ENCODE measurements at regions of chr15 and their contacts with region 1.

Region 1: DNA sequence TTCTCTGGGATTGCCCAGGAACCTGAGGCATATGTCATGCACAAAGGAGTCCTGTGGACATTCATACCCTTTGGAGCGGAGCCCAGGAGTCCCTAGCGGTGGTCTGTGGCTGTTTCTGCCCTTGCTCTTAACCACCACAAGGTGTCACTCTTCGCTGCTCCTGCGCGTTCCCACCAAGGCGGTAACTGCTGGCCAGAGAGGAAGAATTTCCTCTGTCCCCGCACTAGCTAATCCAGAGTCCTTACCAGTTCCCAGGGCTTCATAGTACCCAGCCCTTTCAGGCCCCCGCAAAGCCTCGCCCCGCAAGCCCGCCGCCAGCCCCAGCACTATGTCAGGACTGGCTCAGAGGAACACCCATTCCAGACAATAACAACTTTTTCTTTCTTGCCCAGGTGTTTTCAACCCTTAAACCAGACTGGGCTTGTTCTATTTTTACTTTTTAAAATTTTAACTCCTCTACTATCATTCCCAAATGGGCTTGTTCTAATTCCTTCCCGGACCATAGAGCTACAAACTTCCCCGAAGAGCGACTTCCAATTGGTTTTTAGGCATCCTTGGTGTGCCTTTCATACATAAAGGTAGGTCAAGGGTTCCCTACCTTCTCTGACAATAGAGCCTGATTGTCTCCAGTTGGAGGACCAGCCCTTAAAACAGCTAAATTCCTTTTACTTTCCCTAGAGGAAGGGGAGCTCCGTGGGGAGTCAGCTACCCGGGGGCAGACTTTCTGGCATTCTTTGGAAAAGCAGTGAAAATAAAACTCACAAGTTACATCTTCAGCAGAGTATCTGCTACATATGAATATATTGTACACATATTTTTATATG is 31.8 kb upstream of the ZNF774 start:
- DNase-seq: peak; percentile 87
- CTCF ChIP-seq: peak; percentile 95

Region 2: DNA sequence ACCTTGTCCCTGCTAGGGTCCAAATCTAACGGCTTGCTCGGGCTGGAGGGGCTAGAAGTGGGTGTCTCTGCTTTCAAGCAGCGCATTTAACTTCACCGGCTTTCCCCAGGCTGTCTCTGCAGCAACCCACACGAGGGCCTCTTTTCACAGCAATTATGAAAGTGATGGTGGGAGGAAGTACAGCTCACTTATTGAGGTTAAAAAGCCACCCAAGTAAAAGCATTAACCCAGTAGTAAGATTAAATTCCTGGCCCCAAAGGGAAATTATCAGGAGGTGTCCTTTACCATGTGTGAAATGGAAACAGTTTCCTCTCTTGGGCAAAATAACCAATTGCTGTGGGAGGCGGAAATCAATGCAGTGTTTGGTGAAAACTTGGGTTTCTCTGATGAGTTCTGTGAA is 13.7 kb before region 1 on chr15:
- CTCF ChIA-PET with region 1: interaction called, 61 read pairs
- POLR2A ChIA-PET with region 1: no interaction called
- DNase-seq: peak; percentile 63
- CTCF ChIP-seq: peak; percentile 19

Region 3: DNA sequence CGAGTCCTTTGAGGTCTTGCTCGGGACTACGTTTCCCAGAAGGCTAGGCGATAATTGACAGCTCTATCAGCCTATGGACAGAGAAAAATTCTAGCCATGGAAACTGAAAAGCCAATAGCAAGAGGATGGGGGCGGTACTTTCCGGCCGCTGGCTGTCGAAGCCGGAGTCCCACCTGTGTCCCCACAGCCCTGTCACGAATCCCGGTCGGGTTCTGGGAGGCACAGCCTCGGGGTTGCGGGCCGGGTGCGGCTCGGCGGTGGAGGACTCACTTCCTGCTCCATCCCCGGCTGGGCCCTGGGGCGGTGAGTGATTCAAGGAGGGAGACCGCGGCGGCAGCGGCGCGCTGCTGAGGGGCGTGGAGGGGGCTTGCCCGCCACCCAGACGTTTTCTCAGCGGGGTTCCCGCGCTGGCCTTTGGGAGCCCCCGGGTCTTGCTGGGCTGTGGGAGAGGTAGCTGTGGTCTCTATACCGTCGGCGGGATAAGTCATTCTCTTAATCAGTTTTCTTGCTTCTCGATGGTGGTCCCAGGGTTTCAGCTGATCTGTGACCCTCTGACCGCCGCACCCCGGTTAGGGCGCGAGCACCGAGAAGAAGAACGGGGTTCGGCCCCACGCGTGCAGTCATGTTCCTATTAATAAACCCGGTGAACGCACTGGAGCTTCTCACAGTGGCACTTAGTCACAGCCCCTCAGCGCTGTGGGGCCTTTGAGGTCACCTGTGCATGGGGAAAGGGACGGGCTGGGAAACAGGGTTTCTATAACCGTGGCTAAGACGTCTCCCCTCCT is 32.0 kb after region 1 on chr15 and contains the start of gene ZNF774:
- CTCF ChIA-PET with region 1: interaction called, 13 read pairs
- POLR2A ChIA-PET with region 1: no interaction called
- DNase-seq: peak; percentile 100
- CTCF ChIP-seq: no peak

Region 4: GRCh38 chr15:90400406-90401314 is 80.4 kb after region 1 on chr15:
- CTCF ChIA-PET with region 1: no interaction called
- POLR2A ChIA-PET with region 1: no interaction called
- DNase-seq: peak; percentile 81
- CTCF ChIP-seq: no peak

Region 5: DNA sequence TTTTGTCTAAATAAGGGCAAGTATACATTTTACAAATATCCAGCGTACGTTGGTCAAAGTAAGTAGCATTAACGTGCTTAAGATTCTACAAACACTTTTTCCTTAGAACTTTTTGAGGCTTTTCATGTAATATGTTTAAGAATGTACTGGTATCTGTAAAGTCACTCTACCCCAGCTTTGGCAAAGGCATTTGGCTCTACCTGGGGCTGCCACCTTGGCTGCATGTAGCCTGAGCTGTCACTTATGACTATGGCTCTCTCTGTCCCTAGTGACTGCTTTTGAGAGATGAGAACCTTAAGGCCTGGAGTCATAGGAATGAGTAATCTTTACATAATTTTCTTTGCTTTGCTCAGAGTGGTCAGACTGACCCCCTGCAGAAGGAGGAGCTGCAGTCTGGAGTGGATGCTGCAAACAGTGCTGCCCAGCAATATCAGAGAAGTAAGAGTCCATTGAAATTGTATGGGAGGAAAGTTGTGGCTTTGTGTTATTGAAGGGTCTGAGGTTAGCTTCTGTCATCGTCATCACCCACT is 129.0 kb after region 1 on chr15:
- CTCF ChIA-PET with region 1: interaction called, 12 read pairs
- POLR2A ChIA-PET with region 1: no interaction called
- DNase-seq: no peak
- CTCF ChIP-seq: no peak

Region 6: GRCh38 chr15:90482124-90483011 is 162.1 kb after region 1 on chr15:
- CTCF ChIA-PET with region 1: interaction called, 112 read pairs
- POLR2A ChIA-PET with region 1: no interaction called
- DNase-seq: peak; percentile 39
- CTCF ChIP-seq: peak; percentile 68

Region 7: DNA sequence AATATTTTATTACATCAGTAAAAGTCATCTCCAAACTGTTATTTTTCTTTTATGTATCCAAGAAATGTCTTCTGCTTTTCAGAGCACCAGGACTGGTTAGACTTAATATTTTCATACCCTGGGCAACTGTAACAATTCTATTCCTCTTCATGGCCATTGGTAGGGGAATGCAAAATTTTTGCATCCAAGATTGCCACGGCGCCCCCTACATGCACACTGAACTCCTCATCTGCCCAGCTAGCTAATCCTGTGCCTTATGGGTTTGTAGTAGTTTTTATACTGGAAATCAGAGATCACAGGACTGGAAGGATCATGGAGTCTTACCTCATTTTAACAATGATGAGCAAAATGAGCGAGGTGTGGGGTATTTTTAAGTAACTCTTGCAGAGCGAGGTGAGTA is 283.6 kb after region 1 on chr15:
- CTCF ChIA-PET with region 1: interaction called, 13 read pairs
- POLR2A ChIA-PET with region 1: no interaction called
- DNase-seq: no peak
- CTCF ChIP-seq: peak; percentile 31